ENCODE measurements at regions of chr12 and their contacts with region 1.

Region 1: GRCh38 chr12:54032627-54033100 is at the start of gene HOXC5:
- DNase-seq: peak; percentile 86
- ATAC-seq: peak; percentile 13
- H3K4me3 Mint-ChIP-seq: peak within 1 kb of the TSS; percentile 47
- H3K27ac Mint-ChIP-seq: no peak within 1 kb of the TSS
- H3K4me1 Mint-ChIP-seq: peaks cover 36% of the 10 kb centered on the region
- H3K27me3 Mint-ChIP-seq: peaks cover 99% of the 10 kb centered on the region
- CTCF ChIP-seq: peak; percentile 99
- total RNA-seq, gene HOXC5: not detected in 3 replicates

Region 2: GRCh38 chr12:53811606-53812005 is 221.1 kb before region 1 on chr12:
- CTCF ChIA-PET with region 1: no interaction called
- POLR2A ChIA-PET with region 1: no interaction called
- DNase-seq: no peak
- ATAC-seq: no peak
- H3K4me3 Mint-ChIP-seq: no peak overlapping the region
- H3K27ac Mint-ChIP-seq: no peak overlapping the region
- H3K4me1 Mint-ChIP-seq: peaks cover 9% of the 10 kb centered on the region
- H3K27me3 Mint-ChIP-seq: peaks cover 16% of the 10 kb centered on the region
- CTCF ChIP-seq: no peak

Region 3: DNA sequence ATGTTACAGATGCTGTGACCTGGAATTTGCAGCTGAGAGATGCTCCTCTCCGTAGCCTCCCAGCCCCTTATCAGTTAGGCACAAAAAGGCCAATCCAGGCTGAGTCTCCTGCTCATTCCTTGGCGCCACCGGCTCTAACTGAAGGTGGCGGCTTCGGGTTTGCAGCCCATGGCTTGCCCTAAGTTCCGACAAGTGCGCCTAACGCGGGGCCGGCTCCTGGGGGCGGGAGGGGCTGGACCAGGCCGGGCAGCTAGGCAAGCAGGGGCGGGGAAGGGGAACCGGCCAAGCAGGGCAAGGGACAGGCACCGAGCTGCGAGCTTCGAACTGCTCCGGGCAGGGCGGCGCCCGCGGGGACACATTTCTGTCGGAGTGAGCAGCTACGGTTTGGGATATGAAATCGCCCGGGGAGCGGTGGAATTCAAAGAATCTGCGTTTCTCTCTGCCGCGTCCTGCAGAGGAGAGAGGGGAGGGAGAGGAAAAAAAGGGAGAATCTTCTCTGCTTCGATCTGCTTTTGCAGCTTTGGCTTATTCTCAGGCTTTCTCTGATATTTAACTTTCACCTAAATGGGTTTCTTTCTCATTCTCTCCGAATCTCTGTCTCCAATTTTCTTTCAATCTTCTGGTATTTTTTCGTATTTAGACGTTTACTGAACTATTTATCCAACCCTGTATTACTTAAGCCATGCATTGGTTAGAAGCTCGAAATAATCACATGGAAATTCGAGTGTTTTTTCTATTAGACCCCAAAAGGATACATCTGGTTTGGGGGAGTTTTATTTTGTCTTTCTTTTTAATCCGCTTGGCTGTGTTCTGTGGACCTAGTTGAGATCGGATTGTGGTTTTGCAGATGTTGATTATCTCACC is 79.6 kb before region 1 on chr12:
- CTCF ChIA-PET with region 1: interaction called, 13 read pairs
- POLR2A ChIA-PET with region 1: no interaction called
- DNase-seq: peak; percentile 81
- ATAC-seq: peak; percentile 21
- H3K4me3 Mint-ChIP-seq: peak overlapping the region; percentile 23
- H3K27ac Mint-ChIP-seq: no peak overlapping the region
- H3K4me1 Mint-ChIP-seq: peaks cover 28% of the 10 kb centered on the region
- H3K27me3 Mint-ChIP-seq: peaks cover 100% of the 10 kb centered on the region
- CTCF ChIP-seq: no peak

Region 4: GRCh38 chr12:54005853-54006686 is 26.6 kb before region 1 on chr12:
- CTCF ChIA-PET with region 1: interaction called, 19 read pairs
- POLR2A ChIA-PET with region 1: interaction called, 3 read pairs
- DNase-seq: peak; percentile 96
- ATAC-seq: peak; percentile 69
- H3K4me3 Mint-ChIP-seq: peak overlapping the region; percentile 34
- H3K27ac Mint-ChIP-seq: no peak overlapping the region
- H3K4me1 Mint-ChIP-seq: peaks cover 20% of the 10 kb centered on the region
- H3K27me3 Mint-ChIP-seq: peaks cover 100% of the 10 kb centered on the region
- CTCF ChIP-seq: peak; percentile 96

Region 5: DNA sequence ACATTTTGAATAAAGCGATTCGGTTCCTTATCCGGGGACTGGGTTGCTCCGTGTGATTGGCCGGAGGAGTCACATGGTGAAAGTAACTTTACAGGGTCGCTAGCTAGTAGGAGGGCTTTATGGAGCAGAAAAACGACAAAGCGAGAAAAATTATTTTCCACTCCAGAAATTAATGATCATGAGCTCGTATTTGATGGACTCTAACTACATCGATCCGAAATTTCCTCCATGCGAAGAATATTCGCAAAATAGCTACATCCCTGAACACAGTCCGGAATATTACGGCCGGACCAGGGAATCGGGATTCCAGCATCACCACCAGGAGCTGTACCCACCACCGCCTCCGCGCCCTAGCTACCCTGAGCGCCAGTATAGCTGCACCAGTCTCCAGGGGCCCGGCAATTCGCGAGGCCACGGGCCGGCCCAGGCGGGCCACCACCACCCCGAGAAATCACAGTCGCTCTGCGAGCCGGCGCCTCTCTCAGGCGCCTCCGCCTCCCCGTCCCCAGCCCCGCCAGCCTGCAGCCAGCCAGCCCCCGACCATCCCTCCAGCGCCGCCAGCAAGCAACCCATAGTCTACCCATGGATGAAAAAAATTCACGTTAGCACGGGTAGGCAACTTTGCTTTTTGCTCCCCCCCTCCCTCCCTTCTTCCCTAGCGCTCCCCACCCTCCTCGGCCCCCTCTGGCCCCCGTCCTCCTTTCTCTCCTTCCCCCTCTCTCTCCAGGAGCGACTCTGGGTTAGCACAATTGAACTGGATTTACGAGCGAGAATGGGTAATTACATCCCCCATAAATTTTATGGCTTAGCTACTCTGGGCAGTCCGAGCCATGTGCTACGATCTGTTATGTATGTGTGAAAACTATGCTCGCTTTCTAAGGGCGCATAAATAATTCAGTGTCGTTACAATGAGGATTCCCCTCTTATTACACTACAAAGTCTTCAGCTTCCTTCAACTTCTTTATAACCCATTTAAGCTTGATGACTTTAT is 21.4 kb after region 1 on chr12 and contains the start of gene HOXC4:
- CTCF ChIA-PET with region 1: interaction called, 17 read pairs
- POLR2A ChIA-PET with region 1: interaction called, 3 read pairs
- DNase-seq: peak; percentile 38
- ATAC-seq: peak; percentile 29
- H3K4me3 Mint-ChIP-seq: peak within 1 kb of the TSS; percentile 64
- H3K27ac Mint-ChIP-seq: no peak within 1 kb of the TSS
- H3K4me1 Mint-ChIP-seq: peaks cover 63% of the 10 kb centered on the region
- H3K27me3 Mint-ChIP-seq: peaks cover 100% of the 10 kb centered on the region
- CTCF ChIP-seq: no peak
- total RNA-seq, gene HOXC4: 0.14 to 0.46 TPM (median 0.30 TPM) in 3 replicates

Region 6: GRCh38 chr12:54065677-54066076 is 33.0 kb after region 1 on chr12:
- CTCF ChIA-PET with region 1: no interaction called
- POLR2A ChIA-PET with region 1: no interaction called
- DNase-seq: no peak
- ATAC-seq: no peak
- H3K4me3 Mint-ChIP-seq: no peak overlapping the region
- H3K27ac Mint-ChIP-seq: no peak overlapping the region
- H3K4me1 Mint-ChIP-seq: peaks cover 13% of the 10 kb centered on the region
- H3K27me3 Mint-ChIP-seq: peaks cover 91% of the 10 kb centered on the region
- CTCF ChIP-seq: no peak

Region 7: DNA sequence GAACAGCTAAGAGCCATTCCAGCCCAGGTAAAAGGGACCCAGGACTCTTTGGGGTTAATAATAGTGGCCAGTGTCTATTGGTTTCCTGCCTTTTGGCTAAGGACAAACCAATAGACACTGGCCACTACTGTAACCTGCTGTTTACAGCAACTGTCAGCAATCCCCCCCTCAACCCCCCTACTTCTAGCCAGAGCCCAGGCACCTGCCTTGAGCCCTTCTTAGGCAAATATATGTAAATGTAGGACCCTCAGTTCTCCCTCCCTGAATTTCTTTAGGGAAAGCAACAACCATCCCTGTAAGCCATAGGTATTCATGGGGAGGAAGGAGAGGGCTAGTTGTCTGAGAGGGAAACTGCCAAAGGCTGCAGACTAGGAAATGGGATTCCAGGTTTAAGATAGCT is 43.3 kb after region 1 on chr12:
- CTCF ChIA-PET with region 1: interaction called, 11 read pairs
- POLR2A ChIA-PET with region 1: no interaction called
- DNase-seq: peak; percentile 64
- ATAC-seq: peak; percentile 98
- H3K4me3 Mint-ChIP-seq: peak overlapping the region; percentile 54
- H3K27ac Mint-ChIP-seq: peak overlapping the region; percentile 98
- H3K4me1 Mint-ChIP-seq: peaks cover 61% of the 10 kb centered on the region
- H3K27me3 Mint-ChIP-seq: peaks cover 87% of the 10 kb centered on the region
- CTCF ChIP-seq: no peak

Region 8: DNA sequence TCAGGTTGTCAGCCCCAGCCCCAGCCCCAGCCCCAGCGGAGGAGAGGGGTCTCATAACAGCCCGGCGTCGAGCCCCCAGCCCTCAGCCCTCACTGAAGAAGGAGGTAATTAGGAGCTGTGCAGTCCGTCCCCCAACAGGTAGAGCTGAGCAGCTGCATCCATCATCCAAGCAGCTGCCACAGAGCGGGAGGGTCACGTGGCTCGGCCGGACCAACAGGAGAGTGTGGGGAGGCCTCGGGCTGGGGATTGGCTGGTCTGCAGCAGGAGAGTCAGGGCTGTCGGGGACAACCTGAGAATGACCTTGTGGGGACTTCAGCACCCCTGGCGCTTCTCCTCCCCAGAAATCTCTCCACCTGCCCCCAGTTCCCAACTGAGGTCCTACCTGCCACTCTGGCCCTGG is 126.5 kb after region 1 on chr12:
- CTCF ChIA-PET with region 1: interaction called, 11 read pairs
- POLR2A ChIA-PET with region 1: no interaction called
- DNase-seq: peak; percentile 85
- ATAC-seq: peak; percentile 98
- H3K4me3 Mint-ChIP-seq: no peak overlapping the region
- H3K27ac Mint-ChIP-seq: no peak overlapping the region
- H3K4me1 Mint-ChIP-seq: peaks cover 57% of the 10 kb centered on the region
- H3K27me3 Mint-ChIP-seq: peaks cover 36% of the 10 kb centered on the region
- CTCF ChIP-seq: no peak

Region 9: GRCh38 chr12:54207484-54208294 is 175.0 kb after region 1 on chr12:
- CTCF ChIA-PET with region 1: interaction called, 149 read pairs
- POLR2A ChIA-PET with region 1: interaction called, 5 read pairs
- DNase-seq: peak; percentile 98
- ATAC-seq: peak; percentile 97
- H3K4me3 Mint-ChIP-seq: no peak overlapping the region
- H3K27ac Mint-ChIP-seq: no peak overlapping the region
- H3K4me1 Mint-ChIP-seq: peaks cover 9% of the 10 kb centered on the region; the same call in 1 of the 2 replicates
- H3K27me3 Mint-ChIP-seq: peaks cover 85% of the 10 kb centered on the region
- CTCF ChIP-seq: peak; percentile 88

Measured in WTC11 (cell line).